CD8-positive, alpha-beta T cell (primary cell): ENCODE measurements at regions of chr3 and their contacts with region 1.

Region 1: GRCh38 chr3:32428092-32429068 is 36.7 kb downstream of the CMTM7 start:
- DNase-seq: peak in 8 of 9 experiments; percentile 29 to 82 (median 55)
- ATAC-seq: peak; percentile 59
- H3K4me3 ChIP-seq: peak overlapping the region in 1 of 2 experiments; percentile 26
- H3K4me3 Mint-ChIP-seq: peak overlapping the region; percentile 76
- H3K27ac ChIP-seq: peak overlapping the region; percentile 58 to 81
- H3K27ac Mint-ChIP-seq: peak overlapping the region; percentile 96
- H3K4me1 ChIP-seq: peaks cover 98% of the 10 kb centered on the region
- H3K4me1 Mint-ChIP-seq: peaks cover 94% of the 10 kb centered on the region
- H3K27me3 ChIP-seq: no peaks in the 10 kb centered on the region
- H3K27me3 Mint-ChIP-seq: no peaks in the 10 kb centered on the region
- CTCF ChIP-seq: no peak

Region 2: GRCh38 chr3:32391643-32392535 is 36.5 kb before region 1 on chr3 and contains the start of gene CMTM7:
- CTCF ChIA-PET with region 1: interaction called, 4 read pairs
- POLR2A ChIA-PET with region 1: interaction called, 5 read pairs
- intact Hi-C with region 1: loop called (anchors 5 kb)
- DNase-seq: peak; percentile 26 to 79 (median 61)
- ATAC-seq: peak; percentile 63
- H3K4me3 ChIP-seq: peak within 1 kb of the TSS; percentile 69 to 70
- H3K4me3 Mint-ChIP-seq: peak within 1 kb of the TSS; percentile 97
- H3K27ac ChIP-seq: peak within 1 kb of the TSS; percentile 73 to 77
- H3K27ac Mint-ChIP-seq: peak within 1 kb of the TSS; percentile 98
- H3K4me1 ChIP-seq: peaks cover 29% of the 10 kb centered on the region
- H3K4me1 Mint-ChIP-seq: peaks cover 65% of the 10 kb centered on the region
- H3K27me3 ChIP-seq: no peaks in the 10 kb centered on the region
- H3K27me3 Mint-ChIP-seq: no peaks in the 10 kb centered on the region
- CTCF ChIP-seq: no peak
- total RNA-seq, gene CMTM7: 18.8 to 19.5 TPM

Region 3: DNA sequence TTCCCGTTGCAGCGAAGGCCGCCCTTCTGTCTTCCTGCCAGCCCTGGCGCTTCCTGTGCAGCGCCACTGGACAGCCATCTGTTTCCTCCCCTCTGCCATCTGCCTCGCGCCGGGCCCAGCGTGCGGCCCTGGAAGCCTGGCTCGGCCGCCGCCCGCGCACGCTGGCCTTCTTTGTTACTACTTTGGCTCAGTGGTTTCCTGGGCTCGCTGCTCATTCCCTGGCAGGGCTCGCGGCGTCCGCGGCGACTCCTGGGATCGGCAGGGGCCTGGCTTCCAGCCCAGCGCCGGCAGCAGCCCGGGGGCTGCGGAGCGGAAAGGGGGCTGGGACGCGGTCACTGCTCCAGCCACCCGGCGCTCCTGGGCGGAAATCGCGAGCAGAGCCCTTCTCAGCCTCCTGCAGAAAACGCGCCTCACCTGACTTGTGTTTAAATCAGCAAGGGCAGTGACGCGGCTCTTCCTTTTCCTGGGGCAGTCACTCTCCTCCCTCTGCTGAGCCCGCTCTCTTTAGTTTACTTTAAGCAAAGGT is 26.8 kb before region 1 on chr3:
- CTCF ChIA-PET with region 1: interaction called, 5 read pairs
- POLR2A ChIA-PET with region 1: interaction called, 4 read pairs
- intact Hi-C with region 1: loop called in 1 of 2 experiments (anchors 2 kb)
- DNase-seq: peak in 8 of 9 experiments; percentile 50 to 81 (median 70)
- ATAC-seq: peak; percentile 73
- H3K4me3 ChIP-seq: peak overlapping the region; percentile 53 to 66
- H3K4me3 Mint-ChIP-seq: peak overlapping the region; percentile 86
- H3K27ac ChIP-seq: peak overlapping the region; percentile 81 to 83
- H3K27ac Mint-ChIP-seq: peak overlapping the region; percentile 99
- H3K4me1 ChIP-seq: peaks cover 46% of the 10 kb centered on the region
- H3K4me1 Mint-ChIP-seq: peaks cover 78% of the 10 kb centered on the region
- H3K27me3 ChIP-seq: no peaks in the 10 kb centered on the region
- H3K27me3 Mint-ChIP-seq: no peaks in the 10 kb centered on the region
- CTCF ChIP-seq: no peak

Region 4: GRCh38 chr3:32414520-32415202 is 13.7 kb before region 1 on chr3:
- CTCF ChIA-PET with region 1: interaction called, 7 read pairs
- POLR2A ChIA-PET with region 1: interaction called, 20 read pairs
- intact Hi-C with region 1: loop called in 1 of 2 experiments (anchors 1 kb)
- DNase-seq: peak in 7 of 9 experiments; percentile 26 to 80 (median 63)
- ATAC-seq: peak; percentile 94
- H3K4me3 ChIP-seq: no peak overlapping the region
- H3K4me3 Mint-ChIP-seq: peak overlapping the region; percentile 55
- H3K27ac ChIP-seq: peak overlapping the region; percentile 57 to 80
- H3K27ac Mint-ChIP-seq: peak overlapping the region; percentile 97
- H3K4me1 ChIP-seq: peaks cover 56% of the 10 kb centered on the region
- H3K4me1 Mint-ChIP-seq: peaks cover 81% of the 10 kb centered on the region
- H3K27me3 ChIP-seq: no peaks in the 10 kb centered on the region
- H3K27me3 Mint-ChIP-seq: no peaks in the 10 kb centered on the region
- CTCF ChIP-seq: no peak

Region 5: GRCh38 chr3:32438596-32439344 is 10.4 kb after region 1 on chr3:
- CTCF ChIA-PET with region 1: interaction called, 3 read pairs
- POLR2A ChIA-PET with region 1: interaction called, 21 read pairs
- intact Hi-C with region 1: loop called in 1 of 2 experiments (anchors 1 kb)
- DNase-seq: peak in 4 of 9 experiments; percentile 10 to 49 (median 35)
- ATAC-seq: peak; percentile 56
- H3K4me3 ChIP-seq: no peak overlapping the region
- H3K4me3 Mint-ChIP-seq: peak overlapping the region; percentile 46
- H3K27ac ChIP-seq: peak overlapping the region in 1 of 2 experiments; percentile 31
- H3K27ac Mint-ChIP-seq: peak overlapping the region; percentile 85
- H3K4me1 ChIP-seq: peaks cover 53% of the 10 kb centered on the region
- H3K4me1 Mint-ChIP-seq: peaks cover 75% of the 10 kb centered on the region
- H3K27me3 ChIP-seq: no peaks in the 10 kb centered on the region
- H3K27me3 Mint-ChIP-seq: no peaks in the 10 kb centered on the region
- CTCF ChIP-seq: no peak

Region 6: GRCh38 chr3:32510075-32510724 is 81.8 kb after region 1 on chr3:
- CTCF ChIA-PET with region 1: no interaction called
- POLR2A ChIA-PET with region 1: no interaction called
- intact Hi-C with region 1: no loop called
- DNase-seq: peak; percentile 33 to 78 (median 66)
- ATAC-seq: peak; percentile 98
- H3K4me3 ChIP-seq: no peak overlapping the region
- H3K4me3 Mint-ChIP-seq: no peak overlapping the region
- H3K27ac ChIP-seq: no peak overlapping the region
- H3K27ac Mint-ChIP-seq: no peak overlapping the region
- H3K4me1 ChIP-seq: no peaks in the 10 kb centered on the region
- H3K4me1 Mint-ChIP-seq: no peaks in the 10 kb centered on the region
- H3K27me3 ChIP-seq: no peaks in the 10 kb centered on the region
- H3K27me3 Mint-ChIP-seq: no peaks in the 10 kb centered on the region
- CTCF ChIP-seq: peak; percentile 83